ENCODE measurements at regions of chr16 and their contacts with region 1.

Region 1: GRCh38 chr16:75647492-75648264 is at the starts of genes KARS1 and TERF2IP:
- DNase-seq: peak; percentile 90 to 98 (median 94)
- ATAC-seq: peak; percentile 82
- H3K4me3 ChIP-seq: peak within 1 kb of the TSS; percentile 82
- H3K4me3 Mint-ChIP-seq: peak within 1 kb of the TSS; percentile 98
- H3K27ac ChIP-seq: peak within 1 kb of the TSS; percentile 95 to 96
- H3K27ac Mint-ChIP-seq: peak within 1 kb of the TSS; percentile 100
- H3K4me1 ChIP-seq: peaks cover 42% of the 10 kb centered on the region
- H3K4me1 Mint-ChIP-seq: peaks cover 68% of the 10 kb centered on the region
- H3K27me3 ChIP-seq: no peaks in the 10 kb centered on the region
- H3K27me3 Mint-ChIP-seq: no peaks in the 10 kb centered on the region
- CTCF ChIP-seq: no peak
- total RNA-seq, gene KARS1: 151 to 153 TPM
- total RNA-seq, gene TERF2IP: 122 to 124 TPM

Region 2: GRCh38 chr16:74666425-74667254 is 981.0 kb before region 1 on chr16 and contains the start of gene RFWD3:
- CTCF ChIA-PET with region 1: no interaction called
- POLR2A ChIA-PET with region 1: interaction called, 11 read pairs
- intact Hi-C with region 1: loop called in 1 of 2 experiments (anchors 10 kb)
- DNase-seq: peak; percentile 91 to 99 (median 94)
- ATAC-seq: peak; percentile 99
- H3K4me3 ChIP-seq: peak within 1 kb of the TSS; percentile 93
- H3K4me3 Mint-ChIP-seq: peak within 1 kb of the TSS; percentile 99
- H3K27ac ChIP-seq: peak within 1 kb of the TSS; percentile 69 to 72
- H3K27ac Mint-ChIP-seq: peak within 1 kb of the TSS; percentile 95
- H3K4me1 ChIP-seq: peaks cover 38% of the 10 kb centered on the region
- H3K4me1 Mint-ChIP-seq: peaks cover 44% of the 10 kb centered on the region
- H3K27me3 ChIP-seq: no peaks in the 10 kb centered on the region
- H3K27me3 Mint-ChIP-seq: no peaks in the 10 kb centered on the region
- CTCF ChIP-seq: no peak
- total RNA-seq, gene RFWD3: 44.9 to 47.0 TPM

Region 3: GRCh38 chr16:75432828-75433731 is 214.6 kb before region 1 on chr16 and contains the start of gene CFDP1:
- CTCF ChIA-PET with region 1: no interaction called
- POLR2A ChIA-PET with region 1: interaction called, 52 read pairs
- intact Hi-C with region 1: loop called (anchors 1 kb)
- DNase-seq: peak; percentile 92 to 98 (median 94)
- ATAC-seq: peak; percentile 79
- H3K4me3 ChIP-seq: peak within 1 kb of the TSS; percentile 83
- H3K4me3 Mint-ChIP-seq: peak within 1 kb of the TSS; percentile 94
- H3K27ac ChIP-seq: peak within 1 kb of the TSS; percentile 96 to 97
- H3K27ac Mint-ChIP-seq: peak within 1 kb of the TSS; percentile 96
- H3K4me1 ChIP-seq: peaks cover 33% of the 10 kb centered on the region
- H3K4me1 Mint-ChIP-seq: peaks cover 28% of the 10 kb centered on the region
- H3K27me3 ChIP-seq: no peaks in the 10 kb centered on the region
- H3K27me3 Mint-ChIP-seq: no peaks in the 10 kb centered on the region
- CTCF ChIP-seq: no peak
- total RNA-seq, gene CFDP1: 23.0 to 25.5 TPM

Region 4: GRCh38 chr16:75519881-75520280 is 127.8 kb before region 1 on chr16:
- CTCF ChIA-PET with region 1: interaction called, 12 read pairs
- POLR2A ChIA-PET with region 1: interaction called, 26 read pairs
- intact Hi-C with region 1: no loop called
- DNase-seq: no peak
- ATAC-seq: no peak
- H3K4me3 ChIP-seq: no peak overlapping the region
- H3K4me3 Mint-ChIP-seq: no peak overlapping the region
- H3K27ac ChIP-seq: no peak overlapping the region
- H3K27ac Mint-ChIP-seq: no peak overlapping the region
- H3K4me1 ChIP-seq: peaks cover 12% of the 10 kb centered on the region
- H3K4me1 Mint-ChIP-seq: peaks cover 14% of the 10 kb centered on the region
- H3K27me3 ChIP-seq: no peaks in the 10 kb centered on the region
- H3K27me3 Mint-ChIP-seq: no peaks in the 10 kb centered on the region
- CTCF ChIP-seq: no peak

Region 5: DNA sequence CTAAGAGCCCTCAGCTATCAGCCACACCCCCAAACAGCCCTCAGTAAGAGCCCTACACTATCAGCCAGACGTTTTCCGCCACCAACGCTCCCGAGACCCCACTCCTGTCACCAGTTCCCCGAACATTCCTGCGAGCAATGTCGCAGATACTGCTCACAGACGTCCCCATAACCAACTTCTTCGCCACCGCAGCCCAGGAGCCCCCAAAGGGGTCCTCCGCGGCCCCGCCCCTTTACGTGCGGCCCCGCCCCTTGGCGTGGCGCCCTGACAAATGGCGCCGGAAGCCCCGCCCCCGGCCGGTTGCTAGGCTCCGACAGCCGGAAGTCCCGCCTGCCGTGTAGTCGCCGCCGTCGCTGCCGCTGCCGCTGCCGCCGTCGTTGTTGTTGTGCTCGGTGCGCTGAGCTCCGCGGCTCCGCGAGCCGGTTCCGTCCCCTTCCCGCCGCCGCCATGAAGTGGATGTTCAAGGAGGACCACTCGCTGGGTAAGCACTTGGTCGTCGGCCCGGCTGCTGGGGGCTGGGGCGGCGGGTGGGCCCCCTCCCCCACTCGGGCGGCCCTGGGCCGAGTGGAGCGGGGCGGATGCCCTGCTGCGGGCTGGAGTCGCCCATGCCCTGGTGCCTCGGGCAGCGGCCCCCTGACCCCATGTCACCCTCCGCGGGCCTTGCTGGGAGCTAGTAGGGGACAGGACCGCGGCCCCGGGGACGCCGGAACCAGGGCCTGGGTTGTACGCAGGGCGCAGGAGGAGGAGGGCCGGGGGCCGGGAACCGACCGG is 81.5 kb before region 1 on chr16 and contains the start of gene GABARAPL2:
- CTCF ChIA-PET with region 1: no interaction called
- POLR2A ChIA-PET with region 1: interaction called, 28 read pairs
- intact Hi-C with region 1: loop called (anchors 2 to 5 kb)
- DNase-seq: peak; percentile 83 to 95 (median 88)
- ATAC-seq: peak; percentile 75
- H3K4me3 ChIP-seq: peak within 1 kb of the TSS; percentile 90
- H3K4me3 Mint-ChIP-seq: peak within 1 kb of the TSS; percentile 94
- H3K27ac ChIP-seq: peak within 1 kb of the TSS; percentile 69 to 76
- H3K27ac Mint-ChIP-seq: peak within 1 kb of the TSS; percentile 89
- H3K4me1 ChIP-seq: peaks cover 41% of the 10 kb centered on the region
- H3K4me1 Mint-ChIP-seq: peaks cover 39% of the 10 kb centered on the region
- H3K27me3 ChIP-seq: no peaks in the 10 kb centered on the region
- H3K27me3 Mint-ChIP-seq: peaks cover 14% of the 10 kb centered on the region
- CTCF ChIP-seq: no peak
- total RNA-seq, gene GABARAPL2: 44.6 to 48.3 TPM

Region 6: DNA sequence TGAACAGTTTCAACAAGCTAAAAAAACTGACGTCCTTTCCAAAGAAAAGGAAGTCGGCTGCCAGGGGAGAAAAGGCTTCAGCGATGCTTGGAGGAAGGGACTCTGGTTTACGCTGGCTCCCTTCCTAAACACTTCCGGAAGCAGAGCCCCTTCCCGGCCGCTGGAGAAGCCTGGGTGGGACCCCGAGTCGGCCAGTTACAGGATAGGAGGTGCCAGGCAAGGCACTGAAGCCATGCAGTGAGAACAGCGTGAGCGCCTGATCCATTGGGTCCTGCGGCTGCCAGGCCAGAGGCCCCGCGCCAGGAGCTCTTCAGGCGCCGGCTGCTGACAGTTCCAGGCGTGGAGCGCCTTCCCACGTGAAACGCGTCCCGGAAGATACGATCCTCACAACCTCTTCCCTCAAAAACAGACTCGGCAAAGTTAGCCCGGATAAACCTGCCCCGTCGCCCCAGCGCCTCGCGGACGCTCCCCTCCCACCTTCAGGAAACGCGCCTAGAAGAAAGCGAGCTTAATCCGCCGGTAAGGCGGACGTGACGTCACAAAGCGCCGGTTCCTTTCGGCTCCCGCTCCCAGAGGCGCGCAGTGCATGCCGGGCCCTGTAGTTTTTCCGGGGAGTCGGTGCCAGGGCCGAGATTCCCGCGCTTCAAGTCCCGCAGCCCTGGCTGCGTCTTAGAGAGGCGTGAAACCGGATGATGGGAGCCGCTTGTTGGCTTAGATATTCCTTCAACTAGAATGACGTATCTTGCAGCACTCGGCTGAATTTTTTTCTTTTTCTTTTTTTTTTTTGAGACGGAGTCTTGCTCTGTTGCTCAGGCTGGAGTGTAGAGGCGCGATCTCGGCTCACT is 24.7 kb before region 1 on chr16 and contains the start of gene ADAT1:
- CTCF ChIA-PET with region 1: interaction called, 15 read pairs
- POLR2A ChIA-PET with region 1: interaction called, 239 read pairs
- intact Hi-C with region 1: loop called (anchors 1 kb)
- DNase-seq: peak; percentile 94 to 100 (median 97)
- ATAC-seq: peak; percentile 92
- H3K4me3 ChIP-seq: peak within 1 kb of the TSS; percentile 94
- H3K4me3 Mint-ChIP-seq: peak within 1 kb of the TSS; percentile 99
- H3K27ac ChIP-seq: peak within 1 kb of the TSS; percentile 87 to 98
- H3K27ac Mint-ChIP-seq: peak within 1 kb of the TSS; percentile 99
- H3K4me1 ChIP-seq: peaks cover 61% of the 10 kb centered on the region
- H3K4me1 Mint-ChIP-seq: peaks cover 77% of the 10 kb centered on the region
- H3K27me3 ChIP-seq: no peaks in the 10 kb centered on the region
- H3K27me3 Mint-ChIP-seq: no peaks in the 10 kb centered on the region
- CTCF ChIP-seq: no peak
- total RNA-seq, gene ADAT1: 46.7 to 47.6 TPM

Region 7: DNA sequence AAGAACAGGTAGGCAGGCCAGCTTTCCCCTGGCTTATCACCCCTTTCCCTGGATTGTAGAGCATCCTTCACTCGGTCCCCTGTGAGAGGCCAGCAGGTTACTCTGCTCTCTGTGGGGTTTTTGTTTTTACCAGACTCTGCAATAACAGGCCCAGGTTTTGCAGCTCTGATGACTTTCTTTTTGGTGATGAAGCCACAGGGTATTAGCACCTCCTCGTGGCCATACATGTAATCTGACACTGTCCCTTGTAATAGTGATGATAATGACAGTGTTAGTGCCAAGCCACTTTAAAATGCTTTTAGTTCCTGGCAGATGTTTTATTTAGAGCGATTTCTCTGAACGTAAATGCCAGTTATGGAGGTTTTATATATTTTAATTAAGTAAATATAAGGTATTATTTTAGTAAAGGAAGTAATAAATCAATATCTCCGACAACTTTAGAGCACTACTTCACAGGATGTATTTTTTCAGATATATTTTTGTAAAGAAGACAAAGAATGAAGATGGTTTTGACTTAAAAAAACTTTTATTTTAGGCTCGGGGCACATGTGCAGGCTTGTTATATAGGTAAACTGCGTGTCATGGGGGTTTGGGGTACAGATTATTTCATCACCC is 116.6 kb after region 1 on chr16:
- CTCF ChIA-PET with region 1: interaction called, 3 read pairs
- POLR2A ChIA-PET with region 1: interaction called, 11 read pairs
- intact Hi-C with region 1: loop called (anchors 1 to 5 kb)
- DNase-seq: peak; percentile 31 to 84 (median 44)
- ATAC-seq: peak; percentile 97
- H3K4me3 ChIP-seq: no peak overlapping the region
- H3K4me3 Mint-ChIP-seq: no peak overlapping the region
- H3K27ac ChIP-seq: no peak overlapping the region
- H3K27ac Mint-ChIP-seq: no peak overlapping the region
- H3K4me1 ChIP-seq: peaks cover 6% of the 10 kb centered on the region
- H3K4me1 Mint-ChIP-seq: no peaks in the 10 kb centered on the region
- H3K27me3 ChIP-seq: peaks cover 0 to 3% of the 10 kb centered on the region in 2 experiments
- H3K27me3 Mint-ChIP-seq: no peaks in the 10 kb centered on the region
- CTCF ChIP-seq: peak; percentile 82

Measured in CD4-positive, alpha-beta T cell (primary cell).